HEK293T (cell line): ENCODE measurements at regions of chr14 and their contacts with region 1.

Region 1: DNA sequence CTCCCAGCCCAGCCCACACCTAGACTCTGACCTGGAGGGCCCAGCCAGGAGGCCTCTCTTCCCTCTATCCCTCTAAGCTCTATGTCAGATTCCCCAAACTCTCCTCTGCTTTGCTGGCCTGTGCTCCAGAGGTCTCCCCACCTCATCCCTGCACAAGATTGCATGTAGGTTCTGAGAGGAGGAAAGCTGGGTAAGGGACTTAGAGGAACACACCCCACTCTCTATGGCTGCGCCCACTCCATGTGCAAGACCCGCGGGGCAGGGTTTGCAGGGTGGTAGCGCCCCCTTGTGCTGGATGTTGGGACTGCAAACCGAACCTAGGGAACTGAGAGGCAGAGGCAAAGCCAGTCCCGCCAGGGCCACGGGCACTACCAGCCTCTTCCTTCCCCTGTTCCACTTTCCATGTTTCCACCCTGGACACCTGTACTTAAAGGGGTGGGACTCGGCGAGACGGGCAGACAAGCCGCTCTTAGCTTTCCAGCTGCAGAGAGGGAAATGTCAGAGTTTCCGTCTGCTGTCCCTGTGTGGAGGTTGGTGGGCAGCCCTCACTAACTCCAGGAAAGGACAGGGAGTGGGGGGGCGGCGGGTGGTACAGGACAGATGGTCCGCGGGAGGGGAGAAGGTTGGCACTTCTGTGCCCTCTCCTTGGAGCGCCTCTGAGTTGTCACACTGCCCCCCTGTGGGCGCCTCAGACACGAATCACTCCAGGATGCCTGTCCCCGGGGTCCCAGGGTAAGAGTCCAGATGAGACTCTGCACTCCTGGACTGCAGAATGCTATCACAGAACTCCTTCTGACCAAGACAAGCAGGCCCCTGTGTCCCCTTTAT is 16.8 kb downstream of the MMP14 start:
- DNase-seq: peak; percentile 84

Region 2: DNA sequence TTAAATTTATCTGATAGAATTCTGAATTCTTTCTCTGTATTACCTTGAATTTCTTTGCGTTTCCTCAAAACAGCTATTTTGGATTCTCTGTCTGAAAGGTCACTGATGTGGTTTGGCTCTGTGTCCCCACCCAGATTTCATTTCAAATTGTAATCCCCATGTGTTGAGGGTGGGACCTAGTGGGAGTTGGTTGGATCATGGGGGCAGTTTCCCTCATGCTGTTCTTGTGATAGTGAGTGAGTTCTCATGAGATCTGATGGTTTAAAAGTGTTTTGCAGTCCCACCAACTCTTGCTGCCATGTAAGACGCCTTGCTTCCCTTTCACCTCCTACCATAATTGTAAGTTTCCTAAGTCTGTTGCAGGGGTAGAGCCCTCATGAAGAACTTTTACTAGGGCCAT is 174.9 kb before region 1 on chr14:
- CTCF ChIA-PET with region 1: no interaction called
- POLR2A ChIA-PET with region 1: no interaction called
- DNase-seq: no peak

Region 3: GRCh38 chr14:22822571-22823098 is 30.5 kb before region 1 on chr14:
- CTCF ChIA-PET with region 1: interaction called, 62 read pairs
- POLR2A ChIA-PET with region 1: interaction called, 13 read pairs
- DNase-seq: peak; percentile 79

Region 4: DNA sequence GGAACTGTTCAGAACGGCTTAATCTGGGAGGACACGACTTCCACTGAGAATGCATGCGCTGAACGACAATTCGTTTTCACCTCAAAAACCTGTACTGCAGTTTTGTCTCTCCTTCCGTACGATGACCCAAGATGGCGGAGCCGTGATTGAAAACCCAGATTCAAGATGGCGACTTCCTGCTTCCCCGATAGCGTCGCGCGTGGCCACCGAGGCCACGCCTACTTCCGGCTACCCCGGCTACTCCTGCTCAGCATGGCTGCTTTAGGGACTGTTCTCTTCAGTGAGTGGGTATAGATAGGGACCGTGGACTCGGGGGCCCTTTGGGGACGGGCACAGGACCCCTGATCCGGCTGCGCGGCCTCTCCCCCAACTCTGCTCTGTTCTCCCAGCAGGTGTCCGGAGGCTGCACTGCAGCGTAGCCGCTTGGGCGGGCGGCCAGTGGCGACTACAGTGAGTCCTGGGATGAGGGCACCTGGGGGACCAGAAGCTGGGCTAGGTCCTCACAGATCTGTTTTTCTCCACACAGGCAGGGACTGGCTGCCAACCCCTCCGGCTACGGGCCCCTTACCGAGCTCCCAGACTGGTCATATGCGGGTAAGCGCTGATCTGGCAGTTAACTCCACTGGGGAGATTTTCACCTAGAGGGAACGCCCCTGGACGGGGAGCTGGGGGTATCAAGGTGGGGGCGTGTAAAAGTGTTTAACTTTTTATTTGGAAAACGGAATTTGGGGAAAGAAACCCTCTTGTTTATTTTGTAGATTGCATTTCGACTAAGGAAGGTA is 23.3 kb before region 1 on chr14 and contains the start of gene MRPL52:
- CTCF ChIA-PET with region 1: interaction called, 62 read pairs
- POLR2A ChIA-PET with region 1: interaction called, 11 read pairs
- DNase-seq: peak; percentile 89